ENCODE measurements at regions of chr2 and their contacts with region 1.

Region 1: GRCh38 chr2:178914259-178914849 is 107.1 kb upstream of the TTN start:
- DNase-seq: peak; percentile 78
- H3K4me3 ChIP-seq: no peak overlapping the region
- H3K27ac ChIP-seq: no peak overlapping the region
- H3K4me1 ChIP-seq: no peaks in the 10 kb centered on the region
- H3K27me3 ChIP-seq: no peaks in the 10 kb centered on the region
- CTCF ChIP-seq: peak; percentile 55 to 74 (median 73)
- EP300 ChIP-seq: no peak
- POLR2A ChIP-seq: no peak

Region 2: GRCh38 chr2:178796079-178796677 is 118.2 kb before region 1 on chr2:
- in situ Hi-C with region 1: loop called in 1 of 4 experiments (anchors 10 kb)
- intact Hi-C with region 1: loop called (anchors 10 kb)
- DNase-seq: no peak
- H3K4me3 ChIP-seq: no peak overlapping the region
- H3K27ac ChIP-seq: no peak overlapping the region
- H3K4me1 ChIP-seq: no peaks in the 10 kb centered on the region
- H3K27me3 ChIP-seq: no peaks in the 10 kb centered on the region
- CTCF ChIP-seq: peak; percentile 17 to 49 (median 44)
- EP300 ChIP-seq: no peak
- POLR2A ChIP-seq: no peak

Region 3: GRCh38 chr2:178990533-178991241 is 76.3 kb after region 1 on chr2:
- in situ Hi-C with region 1: no loop called
- intact Hi-C with region 1: no loop called
- DNase-seq: no peak
- H3K4me3 ChIP-seq: no peak overlapping the region
- H3K27ac ChIP-seq: no peak overlapping the region
- H3K4me1 ChIP-seq: no peaks in the 10 kb centered on the region
- H3K27me3 ChIP-seq: no peaks in the 10 kb centered on the region
- CTCF ChIP-seq: no peak
- EP300 ChIP-seq: no peak
- POLR2A ChIP-seq: no peak

Region 4: GRCh38 chr2:179129574-179130238 is 215.4 kb after region 1 on chr2:
- in situ Hi-C with region 1: loop called in 1 of 4 experiments (anchors 25 kb)
- intact Hi-C with region 1: no loop called
- DNase-seq: no peak
- H3K4me3 ChIP-seq: no peak overlapping the region
- H3K27ac ChIP-seq: no peak overlapping the region
- H3K4me1 ChIP-seq: no peaks in the 10 kb centered on the region
- H3K27me3 ChIP-seq: no peaks in the 10 kb centered on the region
- CTCF ChIP-seq: peak in 4 of 5 experiments; percentile 27 to 50 (median 42)
- EP300 ChIP-seq: no peak
- POLR2A ChIP-seq: no peak

Region 5: DNA sequence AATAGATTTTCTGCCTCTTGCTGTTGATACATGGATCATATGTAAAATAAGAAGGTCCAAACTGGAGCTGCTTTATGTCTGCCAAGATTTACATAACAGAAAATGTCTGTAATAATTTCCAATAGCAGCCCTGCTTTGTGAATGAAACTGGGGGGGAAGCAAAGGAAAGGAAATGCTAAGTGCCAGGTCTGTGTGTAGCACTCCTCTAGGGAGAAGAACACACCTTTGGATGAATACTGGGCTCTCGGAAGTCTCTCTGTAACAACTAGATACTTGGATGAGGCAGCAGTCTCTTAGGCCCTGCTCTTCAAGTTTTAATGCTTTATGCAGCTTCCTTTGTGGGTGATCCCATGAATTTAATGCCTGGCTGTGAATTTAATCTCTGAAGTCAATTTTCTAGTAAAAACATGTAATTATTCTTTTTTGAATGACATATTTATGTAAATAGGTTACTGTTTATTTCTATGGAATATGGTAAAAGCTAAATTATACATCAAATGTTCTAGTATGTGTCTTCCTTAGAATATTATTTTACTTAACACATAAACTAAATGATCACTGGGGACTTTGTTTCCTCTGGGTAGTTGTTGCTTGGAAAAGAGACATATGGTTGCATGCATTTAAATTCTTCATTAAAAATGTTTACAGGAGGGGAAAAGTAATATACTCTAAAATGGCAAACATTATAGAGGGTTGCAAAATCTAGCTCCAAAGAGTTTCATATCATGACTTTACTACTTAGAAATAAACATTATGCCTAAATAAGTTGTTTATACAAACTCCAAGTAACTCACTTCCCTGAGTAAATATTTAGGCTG is 1429.4 kb after region 1 on chr2:
- in situ Hi-C with region 1: no loop called
- intact Hi-C with region 1: no loop called
- DNase-seq: no peak
- H3K4me3 ChIP-seq: no peak overlapping the region
- H3K27ac ChIP-seq: no peak overlapping the region
- H3K4me1 ChIP-seq: no peaks in the 10 kb centered on the region
- H3K27me3 ChIP-seq: no peaks in the 10 kb centered on the region
- CTCF ChIP-seq: no peak
- EP300 ChIP-seq: no peak
- POLR2A ChIP-seq: no peak

Measured in transverse colon (tissue), 4 donors.